PC-9 (cell line): ENCODE measurements at regions of chr5 and their contacts with region 1.

Region 1: DNA sequence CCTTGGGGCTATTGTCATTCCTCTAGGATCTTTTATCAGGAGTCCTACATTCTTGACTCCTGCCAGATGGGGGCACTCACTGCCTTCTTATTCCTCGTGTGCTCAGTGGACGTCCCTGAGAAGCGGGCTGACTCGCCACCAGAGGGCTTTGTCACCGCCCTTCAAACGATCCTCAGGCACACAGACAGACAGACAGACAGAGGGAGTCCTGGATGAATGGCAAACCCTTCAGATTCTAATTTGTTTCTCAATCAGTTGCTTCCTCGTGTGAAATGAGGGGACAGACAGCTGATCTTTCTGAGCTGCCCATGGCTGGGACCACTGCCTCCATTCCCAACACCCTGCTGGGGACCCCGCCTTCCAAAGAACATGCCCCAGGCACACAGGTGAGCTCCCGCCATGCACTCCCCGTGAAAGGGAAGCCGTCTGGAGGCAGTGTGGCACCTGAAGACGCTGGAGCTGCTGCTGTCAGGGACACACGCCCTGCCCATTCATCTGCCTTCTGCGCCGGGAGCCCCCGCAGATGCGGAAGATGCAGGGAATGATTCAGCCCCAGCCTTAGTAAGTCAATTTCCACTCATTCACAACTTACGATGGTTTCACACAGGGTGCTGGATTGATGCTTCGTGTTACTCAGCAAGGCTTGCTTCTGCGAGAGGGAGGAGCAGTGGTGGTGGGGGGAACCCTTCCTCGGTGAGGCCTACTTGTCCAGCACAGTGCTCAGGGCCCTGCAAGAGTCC is 24.9 kb upstream of the SH3PXD2B start:
- DNase-seq: peak; percentile 74 to 77
- H3K4me3 ChIP-seq: no peak overlapping the region
- H3K27ac ChIP-seq: no peak overlapping the region
- H3K4me1 ChIP-seq: no peaks in the 10 kb centered on the region
- H3K27me3 ChIP-seq: no peaks in the 10 kb centered on the region
- CTCF ChIP-seq: peak; percentile 86

Region 2: DNA sequence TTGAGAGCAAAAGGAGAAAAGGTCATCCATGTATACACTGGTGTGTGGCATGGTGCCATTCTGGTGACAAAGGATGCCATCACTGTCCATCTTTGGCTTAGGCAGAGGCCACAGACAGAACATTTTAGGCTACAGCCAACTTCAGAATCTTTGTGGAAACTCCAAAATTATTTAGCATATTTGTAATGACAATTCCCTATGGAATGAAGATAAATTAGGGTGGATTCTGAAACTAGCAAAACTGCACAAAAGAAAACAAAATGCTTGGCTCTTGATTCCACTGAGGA is 565.3 kb before region 1 on chr5:
- CTCF ChIA-PET with region 1: no interaction called
- POLR2A ChIA-PET with region 1: no interaction called
- intact Hi-C with region 1: loop called (anchors 5 kb)
- DNase-seq: no peak
- H3K4me3 ChIP-seq: no peak overlapping the region
- H3K27ac ChIP-seq: no peak overlapping the region
- H3K4me1 ChIP-seq: no peaks in the 10 kb centered on the region
- H3K27me3 ChIP-seq: no peaks in the 10 kb centered on the region
- CTCF ChIP-seq: no peak

Region 3: GRCh38 chr5:172175263-172175719 is 303.9 kb before region 1 on chr5:
- CTCF ChIA-PET with region 1: no interaction called
- POLR2A ChIA-PET with region 1: no interaction called
- intact Hi-C with region 1: no loop called
- DNase-seq: no peak
- H3K4me3 ChIP-seq: no peak overlapping the region
- H3K27ac ChIP-seq: no peak overlapping the region
- H3K4me1 ChIP-seq: no peaks in the 10 kb centered on the region
- H3K27me3 ChIP-seq: no peaks in the 10 kb centered on the region
- CTCF ChIP-seq: no peak

Region 4: GRCh38 chr5:172583931-172584511 is 104.8 kb after region 1 on chr5:
- CTCF ChIA-PET with region 1: no interaction called
- POLR2A ChIA-PET with region 1: no interaction called
- intact Hi-C with region 1: loop called (anchors 10 kb)
- DNase-seq: no peak
- H3K4me3 ChIP-seq: no peak overlapping the region
- H3K27ac ChIP-seq: no peak overlapping the region
- H3K4me1 ChIP-seq: no peaks in the 10 kb centered on the region
- H3K27me3 ChIP-seq: peaks cover 95% of the 10 kb centered on the region
- CTCF ChIP-seq: no peak

Region 5: DNA sequence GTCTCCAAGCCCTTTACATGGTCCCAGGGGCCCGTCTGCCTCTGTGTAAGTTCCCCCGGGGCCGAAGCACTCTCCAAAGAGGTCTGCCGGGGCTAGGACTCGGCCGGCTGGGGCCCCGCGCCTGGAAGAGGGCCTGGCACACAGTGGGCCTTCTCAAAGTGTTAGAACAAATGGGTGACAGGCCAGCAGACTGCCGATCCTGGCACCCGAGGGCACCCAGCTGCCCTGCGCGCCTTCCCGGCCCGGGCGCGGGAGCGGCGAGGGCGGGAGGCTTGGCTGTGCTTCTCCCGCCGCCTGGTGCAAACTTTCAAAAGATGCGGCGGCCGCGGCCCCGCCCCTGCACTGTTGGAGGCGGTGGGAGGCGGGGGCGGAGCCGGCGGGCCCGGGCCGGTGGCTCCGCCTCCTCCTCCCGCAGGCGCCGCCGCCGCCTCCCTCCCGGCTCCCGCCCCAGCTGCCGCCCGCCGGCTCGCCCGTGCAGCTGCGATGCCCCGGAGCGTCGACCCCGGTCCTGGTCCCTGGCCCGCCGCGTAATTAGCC is 161.7 kb after region 1 on chr5 and contains the start of gene NEURL1B:
- CTCF ChIA-PET with region 1: no interaction called
- POLR2A ChIA-PET with region 1: no interaction called
- intact Hi-C with region 1: loop called (anchors 5 kb)
- DNase-seq: peak in 1 of 2 experiments; percentile 81
- H3K4me3 ChIP-seq: peak within 1 kb of the TSS; percentile 55
- H3K27ac ChIP-seq: no peak within 1 kb of the TSS
- H3K4me1 ChIP-seq: peaks cover 7% of the 10 kb centered on the region; the same call in 1 of the 2 replicates
- H3K27me3 ChIP-seq: no peaks in the 10 kb centered on the region
- CTCF ChIP-seq: no peak
- total RNA-seq, gene NEURL1B: 14.3 and 20.4 TPM in 2 replicates

Region 6: DNA sequence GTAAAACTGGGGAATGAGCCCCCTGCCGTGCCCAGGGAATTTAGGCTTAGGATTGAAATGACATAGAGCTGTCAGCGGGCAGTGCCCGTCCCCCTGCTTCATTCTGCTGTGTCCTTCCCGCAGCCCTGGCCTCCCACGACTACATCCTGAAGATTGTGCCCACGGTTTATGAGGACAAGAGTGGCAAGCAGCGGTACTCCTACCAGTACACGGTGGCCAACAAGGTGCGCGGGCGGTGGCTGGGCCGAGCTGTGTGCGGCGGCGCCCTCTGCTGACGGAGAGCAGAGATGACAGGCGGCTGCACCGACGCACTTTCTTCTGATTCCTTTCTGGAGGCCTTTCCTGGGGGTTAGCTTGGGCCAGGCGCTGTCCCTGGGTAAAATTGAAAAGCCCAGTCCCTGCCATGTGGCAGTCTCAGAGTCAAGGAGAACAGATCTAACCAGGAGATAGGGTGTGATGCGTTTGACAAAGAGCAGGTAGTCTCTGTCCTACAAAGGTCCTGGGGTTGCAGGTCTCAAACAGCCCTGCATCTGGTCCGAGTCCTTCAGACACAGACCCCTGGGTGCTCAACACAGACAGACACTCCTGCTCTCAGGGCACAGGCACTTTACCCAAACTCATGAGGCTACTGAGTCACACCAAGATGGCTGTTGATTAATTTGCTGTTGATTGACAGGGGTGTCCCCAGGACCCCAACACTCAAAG is 453.3 kb after region 1 on chr5:
- CTCF ChIA-PET with region 1: no interaction called
- POLR2A ChIA-PET with region 1: no interaction called
- intact Hi-C with region 1: loop called (anchors 1 kb)
- DNase-seq: peak in 1 of 2 experiments; percentile 70
- H3K4me3 ChIP-seq: no peak overlapping the region
- H3K27ac ChIP-seq: no peak overlapping the region
- H3K4me1 ChIP-seq: peaks cover 22% of the 10 kb centered on the region
- H3K27me3 ChIP-seq: no peaks in the 10 kb centered on the region
- CTCF ChIP-seq: peak; percentile 85

Region 7: GRCh38 chr5:174317259-174317894 is 1838.2 kb after region 1 on chr5:
- CTCF ChIA-PET with region 1: no interaction called
- POLR2A ChIA-PET with region 1: no interaction called
- intact Hi-C with region 1: loop called (anchors 5 kb)
- DNase-seq: peak in 1 of 2 experiments; percentile 48
- H3K4me3 ChIP-seq: no peak overlapping the region
- H3K27ac ChIP-seq: no peak overlapping the region
- H3K4me1 ChIP-seq: no peaks in the 10 kb centered on the region
- H3K27me3 ChIP-seq: peaks cover 77% of the 10 kb centered on the region
- CTCF ChIP-seq: peak; percentile 78